PC-3 (cell line): ENCODE measurements at regions of chr1 and their contacts with region 1.

Region 1: GRCh38 chr1:163295949-163296348 is 25.8 kb upstream of the NUF2 start:
- DNase-seq: no peak
- ATAC-seq: no peak
- H3K4me3 ChIP-seq: no peak overlapping the region
- H3K27ac ChIP-seq: no peak overlapping the region
- H3K4me1 ChIP-seq: peaks cover 8% of the 10 kb centered on the region; the same call in 1 of the 2 replicates
- H3K27me3 ChIP-seq: no peaks in the 10 kb centered on the region
- CTCF ChIP-seq: no peak

Region 2: GRCh38 chr1:163202833-163203451 is 93.0 kb before region 1 on chr1 and contains the start of gene RGS5:
- CTCF ChIA-PET with region 1: no interaction called
- POLR2A ChIA-PET with region 1: no interaction called
- intact Hi-C with region 1: loop called (anchors 5 kb)
- DNase-seq: no peak
- ATAC-seq: no peak
- H3K4me3 ChIP-seq: no peak within 1 kb of the TSS
- H3K27ac ChIP-seq: no peak within 1 kb of the TSS
- H3K4me1 ChIP-seq: no peaks in the 10 kb centered on the region
- H3K27me3 ChIP-seq: no peaks in the 10 kb centered on the region
- CTCF ChIP-seq: no peak
- total RNA-seq, gene RGS5: 5.0 and 13.4 TPM in 2 replicates

Region 3: GRCh38 chr1:163231385-163231784 is 64.6 kb before region 1 on chr1:
- CTCF ChIA-PET with region 1: no interaction called
- POLR2A ChIA-PET with region 1: no interaction called
- intact Hi-C with region 1: no loop called
- DNase-seq: no peak
- ATAC-seq: peak; percentile 35; the same call in 1 of the 2 replicates
- H3K4me3 ChIP-seq: no peak overlapping the region
- H3K27ac ChIP-seq: no peak overlapping the region
- H3K4me1 ChIP-seq: no peaks in the 10 kb centered on the region
- H3K27me3 ChIP-seq: no peaks in the 10 kb centered on the region
- CTCF ChIP-seq: no peak

Region 4: GRCh38 chr1:163331116-163331515 is 35.2 kb after region 1 on chr1:
- CTCF ChIA-PET with region 1: no interaction called
- POLR2A ChIA-PET with region 1: no interaction called
- intact Hi-C with region 1: no loop called
- DNase-seq: no peak
- ATAC-seq: no peak
- H3K4me3 ChIP-seq: no peak overlapping the region
- H3K27ac ChIP-seq: no peak overlapping the region
- H3K4me1 ChIP-seq: no peaks in the 10 kb centered on the region
- H3K27me3 ChIP-seq: no peaks in the 10 kb centered on the region
- CTCF ChIP-seq: no peak